Right ventricle myocardium inferior (tissue), 1 donor: ENCODE measurements at regions of chr3 and their contacts with region 1.

Region 1: GRCh38 chr3:29693863-29694262 is 413.0 kb downstream of the RBMS3 start:
- DNase-seq: no peak
- ATAC-seq: no peak

Region 2: GRCh38 chr3:29144807-29145206 is 549.1 kb before region 1 on chr3:
- intact Hi-C with region 1: loop called (anchors 10 kb)
- DNase-seq: no peak
- ATAC-seq: peak; percentile 59

Region 3: GRCh38 chr3:29525254-29525881 is 168.5 kb before region 1 on chr3:
- intact Hi-C with region 1: loop called (anchors 5 kb)
- DNase-seq: peak; percentile 70
- ATAC-seq: peak; percentile 93

Region 4: DNA sequence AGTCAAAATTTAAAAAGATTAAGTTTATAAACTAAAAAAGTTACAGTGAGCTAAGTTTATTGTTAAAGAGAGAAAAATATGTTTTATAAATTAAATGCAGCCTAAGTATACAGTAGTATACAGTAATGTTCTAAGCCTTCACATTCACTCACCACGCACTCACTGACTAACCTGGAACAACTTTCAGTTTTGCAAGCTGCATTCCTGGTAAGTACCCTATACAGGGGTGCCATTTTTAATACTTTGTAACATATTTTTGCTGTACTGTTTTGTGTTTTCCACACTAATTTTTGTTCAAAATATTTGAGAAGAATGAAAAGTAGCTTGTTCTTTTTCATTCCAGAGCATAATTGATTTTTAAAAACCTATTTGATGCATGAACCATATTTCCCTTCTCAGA is 111.9 kb after region 1 on chr3:
- intact Hi-C with region 1: no loop called
- DNase-seq: no peak
- ATAC-seq: no peak